Calu3 (cell line): ENCODE measurements at regions of chr15 and their contacts with region 1.

Region 1: GRCh38 chr15:93321881-93322289 is 232.9 kb upstream of the RGMA start:
- DNase-seq: peak; percentile 80
- H3K4me3 Mint-ChIP-seq: no peak overlapping the region
- H3K27ac Mint-ChIP-seq: no peak overlapping the region
- H3K4me1 Mint-ChIP-seq: peaks cover 15% of the 10 kb centered on the region
- H3K27me3 Mint-ChIP-seq: no peaks in the 10 kb centered on the region
- CTCF ChIP-seq: no peak

Region 2: GRCh38 chr15:93460717-93461116 is 138.8 kb after region 1 on chr15:
- CTCF ChIA-PET with region 1: no interaction called
- intact Hi-C with region 1: loop called (anchors 5 kb)
- DNase-seq: peak; percentile 15
- H3K4me3 Mint-ChIP-seq: peak overlapping the region; percentile 38
- H3K27ac Mint-ChIP-seq: peak overlapping the region; percentile 66
- H3K4me1 Mint-ChIP-seq: peaks cover 30% of the 10 kb centered on the region
- H3K27me3 Mint-ChIP-seq: no peaks in the 10 kb centered on the region
- CTCF ChIP-seq: no peak